Activated CD4-positive, alpha-beta memory T cell treated with anti-CD3 and anti-CD28 coated beads, Interleukin-2, amount 10 ng/mL, durations not matched to agents 7 days and 5 days (primary cell): ENCODE measurements at regions of chr3 and their contacts with region 1.

Region 1: GRCh38 chr3:52444860-52445793 is at the start of gene SEMA3G:
- DNase-seq: peak; percentile 84
- H3K4me3 Mint-ChIP-seq: no peak within 1 kb of the TSS
- H3K27ac Mint-ChIP-seq: no peak within 1 kb of the TSS
- H3K4me1 Mint-ChIP-seq: peaks cover 4% of the 10 kb centered on the region
- H3K27me3 Mint-ChIP-seq: no peaks in the 10 kb centered on the region
- total RNA-seq, gene SEMA3G: 0.18 to 0.20 TPM

Region 2: GRCh38 chr3:52318186-52318816 is 126.8 kb before region 1 on chr3:
- CTCF ChIA-PET with region 1: no interaction called
- POLR2A ChIA-PET with region 1: no interaction called
- DNase-seq: no peak
- H3K4me3 Mint-ChIP-seq: no peak overlapping the region
- H3K27ac Mint-ChIP-seq: no peak overlapping the region
- H3K4me1 Mint-ChIP-seq: peaks cover 25% of the 10 kb centered on the region
- H3K27me3 Mint-ChIP-seq: no peaks in the 10 kb centered on the region

Region 3: DNA sequence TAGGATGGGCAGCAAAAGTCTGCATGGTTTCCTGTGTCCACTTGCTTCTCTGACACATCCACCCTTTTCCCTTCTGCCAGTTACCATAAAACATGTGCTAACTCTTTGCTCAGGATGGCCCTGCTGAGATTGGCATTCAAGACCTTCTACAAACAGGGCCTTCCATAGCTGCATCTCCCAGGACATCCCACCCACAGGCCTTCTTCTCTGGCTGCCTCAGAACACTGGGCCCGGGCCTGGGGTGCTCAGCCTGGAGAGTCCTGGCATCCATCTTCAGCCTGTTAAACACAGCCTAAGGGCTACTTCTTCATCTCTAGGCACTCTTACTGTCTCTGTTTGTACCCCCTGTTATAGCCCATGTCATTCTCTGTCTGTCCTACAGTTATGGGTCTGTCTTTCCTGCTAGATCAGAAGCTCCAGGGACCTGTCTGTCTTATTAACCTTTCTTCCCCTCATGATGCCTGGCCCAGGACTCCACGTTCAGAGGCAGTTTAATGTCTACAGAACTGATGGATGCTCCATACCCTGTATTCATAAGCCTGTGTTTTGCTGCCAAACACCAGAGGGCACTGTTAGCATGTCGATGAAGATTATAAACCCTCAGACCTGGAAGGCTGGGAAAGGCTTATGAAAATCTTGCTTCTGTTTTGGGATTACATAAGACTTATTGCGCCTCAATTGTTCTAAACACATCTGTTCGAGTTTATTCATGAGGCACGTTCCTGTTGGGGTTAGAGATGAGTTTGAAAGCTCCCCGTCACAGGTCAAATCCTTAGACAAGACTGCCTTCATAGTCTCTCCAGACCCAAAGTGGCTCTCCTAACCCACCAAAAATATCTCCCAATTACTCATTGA is 16.7 kb before region 1 on chr3:
- CTCF ChIA-PET with region 1: interaction called, 151 read pairs
- POLR2A ChIA-PET with region 1: interaction called, 7 read pairs
- DNase-seq: peak; percentile 44
- H3K4me3 Mint-ChIP-seq: no peak overlapping the region
- H3K27ac Mint-ChIP-seq: no peak overlapping the region
- H3K4me1 Mint-ChIP-seq: peaks cover 16% of the 10 kb centered on the region
- H3K27me3 Mint-ChIP-seq: peaks cover 6% of the 10 kb centered on the region

Region 4: DNA sequence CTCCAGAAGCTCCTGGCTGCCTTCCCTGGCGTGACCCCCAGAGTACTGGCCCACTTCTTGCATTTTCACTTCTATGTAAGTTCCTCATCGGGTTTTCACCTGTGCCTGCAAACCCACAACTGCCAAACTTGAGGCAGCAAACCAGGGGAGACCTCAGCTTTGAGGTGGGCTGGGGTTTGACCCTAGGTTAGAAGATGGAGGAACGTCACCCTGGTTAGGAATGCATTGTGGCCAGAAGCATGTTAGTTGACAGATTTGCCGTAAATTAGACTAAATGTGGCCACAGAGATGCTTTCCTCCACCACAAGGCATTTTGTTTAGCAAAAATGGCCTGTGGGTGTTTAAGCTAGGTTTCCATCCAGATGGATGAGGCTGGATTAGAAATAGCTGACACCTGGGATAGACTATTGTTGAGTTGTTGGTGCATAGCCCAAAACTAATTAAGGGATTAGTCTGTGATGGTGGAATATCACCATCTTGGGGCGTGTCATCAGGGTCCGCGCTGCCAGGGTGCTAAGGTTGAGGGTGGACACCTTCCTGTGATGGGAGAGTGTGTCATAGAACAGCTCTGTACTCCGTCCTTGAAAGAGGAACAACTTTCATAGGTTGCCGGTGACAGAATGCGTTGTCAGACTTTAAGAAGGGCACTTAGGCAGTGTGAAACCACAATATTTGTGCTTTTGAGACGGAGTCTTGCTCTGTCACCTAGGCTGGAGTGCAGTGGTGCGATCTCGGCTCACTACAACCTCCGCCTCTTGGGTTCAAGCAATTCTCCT is 13.8 kb after region 1 on chr3:
- CTCF ChIA-PET with region 1: interaction called, 12 read pairs
- POLR2A ChIA-PET with region 1: interaction called, 9 read pairs
- DNase-seq: no peak
- H3K4me3 Mint-ChIP-seq: no peak overlapping the region
- H3K27ac Mint-ChIP-seq: no peak overlapping the region
- H3K4me1 Mint-ChIP-seq: peaks cover 36% of the 10 kb centered on the region
- H3K27me3 Mint-ChIP-seq: no peaks in the 10 kb centered on the region